HepG2 (cell line): ENCODE measurements at regions of chr2 and their contacts with region 1.

Region 1: DNA sequence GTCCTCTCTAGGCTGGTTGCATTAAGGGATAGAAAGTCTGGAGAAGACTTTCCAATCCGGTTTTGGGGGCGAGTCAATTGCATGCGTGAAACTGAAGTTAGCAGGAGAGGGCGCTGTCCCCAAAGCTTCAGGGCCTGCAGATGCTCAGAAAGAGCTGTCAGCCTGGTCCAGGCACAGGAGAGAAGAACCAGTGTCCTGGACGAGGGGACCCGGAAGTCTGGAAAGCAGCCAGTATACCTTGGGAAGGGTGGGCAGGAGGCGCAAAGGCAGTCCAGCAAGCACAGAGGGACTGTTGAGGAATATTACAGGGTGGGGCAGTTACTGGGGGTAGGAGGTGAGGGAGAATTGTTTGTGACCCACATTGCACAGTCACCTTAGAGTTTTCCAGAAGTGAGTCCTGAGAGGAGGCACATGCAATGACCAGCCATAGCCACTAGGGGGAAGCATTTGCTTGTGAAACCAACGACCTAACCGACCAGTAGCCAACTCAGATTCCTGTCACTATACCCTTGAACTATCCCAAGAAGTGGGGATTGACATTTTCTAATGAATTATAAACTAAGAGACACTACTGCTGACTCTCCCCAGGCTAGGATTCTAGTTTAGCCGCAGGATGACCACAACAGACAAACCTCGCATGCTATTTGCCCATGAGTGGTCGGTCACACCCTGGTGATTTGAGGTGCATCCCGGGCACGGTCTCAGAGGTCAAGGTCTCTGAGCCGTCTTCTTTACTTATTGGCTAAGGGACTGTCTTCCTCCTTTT is 172.8 kb downstream of the RDH14 start:
- DNase-seq: peak; percentile 71
- ATAC-seq: peak; percentile 97
- H3K4me3 ChIP-seq: peak overlapping the region in 1 of 3 experiments; percentile 43; a peak in 1 of 6 replicates
- H3K27ac ChIP-seq: no peak overlapping the region
- H3K4me1 ChIP-seq: 0 out of 2 replicates have a peak, but pooled peaks cover 8% of the 10 kb centered on the region
- H3K27me3 ChIP-seq: no peaks in the 10 kb centered on the region
- CTCF ChIP-seq: peak; percentile 88
- EP300 ChIP-seq: 0 out of 4 replicates have a peak, but pooled peaks of 1 of the 2 experiments have one; percentile 8
- POLR2A ChIP-seq: no peak
- RAD21 ChIP-seq: peak; percentile 57; the same call in 1 of the 2 replicates

Region 2: GRCh38 chr2:17455343-17455742 is 932.3 kb before region 1 on chr2:
- CTCF ChIA-PET with region 1: no interaction called
- POLR2A ChIA-PET with region 1: no interaction called
- in situ Hi-C with region 1: no loop called
- intact Hi-C with region 1: no loop called
- DNase-seq: no peak
- ATAC-seq: no peak
- H3K4me3 ChIP-seq: no peak overlapping the region
- H3K27ac ChIP-seq: no peak overlapping the region
- H3K4me1 ChIP-seq: peaks cover 19% of the 10 kb centered on the region
- H3K27me3 ChIP-seq: no peaks in the 10 kb centered on the region
- CTCF ChIP-seq: no peak
- EP300 ChIP-seq: no peak
- POLR2A ChIP-seq: no peak
- RAD21 ChIP-seq: no peak

Region 3: GRCh38 chr2:18356676-18357075 is 30.9 kb before region 1 on chr2:
- CTCF ChIA-PET with region 1: no interaction called
- POLR2A ChIA-PET with region 1: no interaction called
- in situ Hi-C with region 1: no loop called
- intact Hi-C with region 1: no loop called
- DNase-seq: no peak
- ATAC-seq: no peak
- H3K4me3 ChIP-seq: no peak overlapping the region
- H3K27ac ChIP-seq: no peak overlapping the region
- H3K4me1 ChIP-seq: no peaks in the 10 kb centered on the region
- H3K27me3 ChIP-seq: 0 out of 5 replicates have a peak, but pooled peaks cover 0 to 7% of the 10 kb centered on the region in 2 experiments
- CTCF ChIP-seq: no peak
- EP300 ChIP-seq: no peak
- POLR2A ChIP-seq: no peak
- RAD21 ChIP-seq: no peak

Region 4: DNA sequence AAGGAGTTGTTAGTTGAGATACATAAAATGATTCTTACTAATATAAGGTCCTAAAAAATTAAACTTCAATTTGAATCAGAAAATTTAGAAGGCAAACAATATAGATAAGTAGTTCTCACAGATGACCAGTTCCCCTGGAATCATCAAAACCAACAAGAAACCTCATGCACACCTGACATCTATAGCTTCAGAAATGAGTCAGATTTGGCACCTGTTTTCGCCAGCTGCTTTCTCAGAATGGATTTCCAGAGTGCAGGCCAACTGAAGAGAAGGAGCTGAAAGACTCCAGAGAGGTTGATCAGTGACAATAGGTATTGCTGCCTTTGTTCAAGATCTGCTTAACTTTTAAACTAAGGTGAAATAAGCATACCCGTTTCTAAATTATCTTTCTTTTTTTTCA is 19.6 kb before region 1 on chr2:
- CTCF ChIA-PET with region 1: no interaction called
- POLR2A ChIA-PET with region 1: no interaction called
- in situ Hi-C with region 1: no loop called
- intact Hi-C with region 1: no loop called
- DNase-seq: no peak
- ATAC-seq: no peak
- H3K4me3 ChIP-seq: no peak overlapping the region
- H3K27ac ChIP-seq: no peak overlapping the region
- H3K4me1 ChIP-seq: no peaks in the 10 kb centered on the region
- H3K27me3 ChIP-seq: no peaks in the 10 kb centered on the region
- CTCF ChIP-seq: no peak
- EP300 ChIP-seq: no peak
- POLR2A ChIP-seq: no peak
- RAD21 ChIP-seq: no peak

Region 5: GRCh38 chr2:18410543-18410942 is 22.9 kb after region 1 on chr2:
- CTCF ChIA-PET with region 1: no interaction called
- POLR2A ChIA-PET with region 1: no interaction called
- in situ Hi-C with region 1: no loop called
- intact Hi-C with region 1: loop called (anchors 2 kb)
- DNase-seq: no peak
- ATAC-seq: no peak
- H3K4me3 ChIP-seq: no peak overlapping the region
- H3K27ac ChIP-seq: no peak overlapping the region
- H3K4me1 ChIP-seq: no peaks in the 10 kb centered on the region
- H3K27me3 ChIP-seq: no peaks in the 10 kb centered on the region
- CTCF ChIP-seq: no peak
- EP300 ChIP-seq: no peak
- POLR2A ChIP-seq: no peak
- RAD21 ChIP-seq: no peak

Region 6: DNA sequence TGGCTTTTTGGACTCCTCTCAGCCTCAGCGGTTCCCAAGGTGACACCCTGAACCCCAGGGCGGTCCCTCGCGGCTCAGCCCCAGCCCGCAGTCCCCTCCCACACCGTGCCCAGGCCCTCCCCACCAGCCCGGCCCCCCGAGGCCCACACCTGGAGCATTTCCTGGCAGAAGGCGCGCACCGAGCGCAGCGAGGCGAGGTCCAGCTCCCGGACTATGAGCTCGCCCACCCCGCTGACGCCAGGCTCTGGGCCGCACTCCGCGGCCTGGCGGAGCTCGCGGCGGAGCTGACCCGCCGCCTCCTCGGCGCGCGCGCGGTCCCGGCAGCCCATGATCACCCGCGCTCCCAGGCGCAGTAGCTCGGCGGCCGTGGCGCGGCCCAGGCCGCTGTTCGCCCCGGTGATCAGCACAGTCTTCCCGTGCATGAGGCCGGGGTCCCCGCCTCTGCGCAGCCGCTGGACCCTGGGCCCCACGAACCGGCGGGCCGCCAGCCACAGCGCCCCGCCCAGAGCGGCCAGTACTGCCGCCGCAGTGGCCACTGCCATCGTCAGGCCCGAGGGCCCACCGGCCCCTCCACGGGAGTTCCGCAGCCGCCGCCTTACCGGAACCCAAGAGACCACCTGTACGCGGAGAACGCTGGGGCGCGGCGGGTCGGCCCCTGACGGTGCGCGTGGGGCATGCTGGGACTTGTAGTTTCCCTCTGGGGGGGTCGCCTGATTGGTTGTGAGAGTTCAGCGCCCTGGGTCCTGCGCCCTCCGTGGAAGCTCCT is 172.6 kb after region 1 on chr2 and contains the start of gene RDH14:
- CTCF ChIA-PET with region 1: no interaction called
- POLR2A ChIA-PET with region 1: no interaction called
- in situ Hi-C with region 1: no loop called
- intact Hi-C with region 1: loop called (anchors 5 kb)
- DNase-seq: peak; percentile 97
- ATAC-seq: peak; percentile 94
- H3K4me3 ChIP-seq: peak within 1 kb of the TSS; percentile 78 to 84 (median 83)
- H3K27ac ChIP-seq: peak within 1 kb of the TSS; percentile 87
- H3K4me1 ChIP-seq: peaks cover 27% of the 10 kb centered on the region
- H3K27me3 ChIP-seq: no peaks in the 10 kb centered on the region
- CTCF ChIP-seq: peak; percentile 35
- EP300 ChIP-seq: 0 out of 4 replicates have a peak, but pooled peaks of 1 of the 2 experiments have one; percentile 10
- POLR2A ChIP-seq: peak; percentile 70 to 74; a peak in 3 of 4 replicates
- RAD21 ChIP-seq: peak; percentile 79
- total RNA-seq, gene RDH14: 37.4 and 39.9 TPM in 2 replicates